ENCODE measurements at regions of chr10 and their contacts with region 1.

Region 1: GRCh38 chr10:124388823-124389612 is 29.7 kb downstream of the OAT start:
- DNase-seq: peak; percentile 94
- ATAC-seq: peak; percentile 99
- H3K4me3 ChIP-seq: peak overlapping the region in 4 of 5 experiments; percentile 38 to 75 (median 57)
- H3K4me3 Mint-ChIP-seq: peak overlapping the region; percentile 61
- H3K27ac ChIP-seq: no peak overlapping the region
- H3K27ac Mint-ChIP-seq: no peak overlapping the region
- H3K4me1 ChIP-seq: peaks cover 4 to 13% of the 10 kb centered on the region in 2 donors
- H3K4me1 Mint-ChIP-seq: peaks cover 5% of the 10 kb centered on the region
- H3K27me3 ChIP-seq: peaks cover 0 to 3% (median under 1%) of the 10 kb centered on the region in 4 experiments
- H3K27me3 Mint-ChIP-seq: peaks cover 6% of the 10 kb centered on the region
- CTCF ChIP-seq: peak; percentile 97

Region 2: DNA sequence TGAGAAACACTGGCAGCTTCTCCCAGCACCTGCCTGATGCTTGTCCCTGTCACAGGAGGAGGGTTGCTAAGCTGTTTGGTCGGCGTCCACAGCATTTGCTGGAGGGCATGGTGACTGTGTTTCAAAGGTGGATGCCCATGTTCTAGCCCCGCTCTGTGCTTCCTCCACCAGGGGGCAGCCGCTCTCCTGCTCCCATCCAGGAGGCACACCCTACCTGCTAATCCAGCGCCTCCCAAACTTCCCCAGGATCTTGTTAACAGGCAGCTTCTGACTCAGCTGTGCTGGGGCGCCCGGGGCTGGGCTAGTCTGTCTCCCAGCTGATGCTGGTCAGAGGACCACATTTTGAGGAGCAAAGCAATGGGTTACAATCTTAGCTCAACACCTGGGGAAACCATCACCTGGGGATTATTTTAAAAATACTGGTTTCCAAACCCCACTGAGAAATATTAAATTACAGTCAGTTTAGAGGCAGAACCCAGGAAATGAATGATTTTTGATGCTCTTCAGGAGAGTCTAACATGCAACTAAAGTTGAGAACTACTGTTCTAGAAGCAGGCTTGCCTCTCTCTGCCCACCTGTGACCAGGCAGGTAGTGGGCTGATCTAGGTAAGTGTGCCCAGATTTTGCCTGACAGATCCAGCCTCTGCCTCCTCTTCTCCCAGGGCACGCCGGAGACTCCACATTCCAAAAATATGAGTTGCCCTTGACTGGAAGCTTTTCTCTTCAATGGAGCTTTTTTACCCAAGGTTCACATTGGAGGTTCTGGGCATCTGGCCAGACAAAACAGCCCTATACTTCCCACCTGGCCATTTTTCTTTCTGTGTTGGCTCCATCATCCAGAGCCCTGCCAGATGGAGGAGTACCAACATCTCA is 815.5 kb before region 1 on chr10:
- CTCF ChIA-PET with region 1: no interaction called
- POLR2A ChIA-PET with region 1: no interaction called
- intact Hi-C with region 1: loop called (anchors 2 kb)
- DNase-seq: peak; percentile 37
- ATAC-seq: no peak
- H3K4me3 ChIP-seq: no peak overlapping the region
- H3K4me3 Mint-ChIP-seq: no peak overlapping the region
- H3K27ac ChIP-seq: no peak overlapping the region
- H3K27ac Mint-ChIP-seq: no peak overlapping the region
- H3K4me1 ChIP-seq: no peaks in the 10 kb centered on the region
- H3K4me1 Mint-ChIP-seq: no peaks in the 10 kb centered on the region
- H3K27me3 ChIP-seq: peaks cover 0 to 19% (median 7%) of the 10 kb centered on the region in 4 experiments
- H3K27me3 Mint-ChIP-seq: peaks cover 42% of the 10 kb centered on the region
- CTCF ChIP-seq: peak; percentile 58

Region 3: DNA sequence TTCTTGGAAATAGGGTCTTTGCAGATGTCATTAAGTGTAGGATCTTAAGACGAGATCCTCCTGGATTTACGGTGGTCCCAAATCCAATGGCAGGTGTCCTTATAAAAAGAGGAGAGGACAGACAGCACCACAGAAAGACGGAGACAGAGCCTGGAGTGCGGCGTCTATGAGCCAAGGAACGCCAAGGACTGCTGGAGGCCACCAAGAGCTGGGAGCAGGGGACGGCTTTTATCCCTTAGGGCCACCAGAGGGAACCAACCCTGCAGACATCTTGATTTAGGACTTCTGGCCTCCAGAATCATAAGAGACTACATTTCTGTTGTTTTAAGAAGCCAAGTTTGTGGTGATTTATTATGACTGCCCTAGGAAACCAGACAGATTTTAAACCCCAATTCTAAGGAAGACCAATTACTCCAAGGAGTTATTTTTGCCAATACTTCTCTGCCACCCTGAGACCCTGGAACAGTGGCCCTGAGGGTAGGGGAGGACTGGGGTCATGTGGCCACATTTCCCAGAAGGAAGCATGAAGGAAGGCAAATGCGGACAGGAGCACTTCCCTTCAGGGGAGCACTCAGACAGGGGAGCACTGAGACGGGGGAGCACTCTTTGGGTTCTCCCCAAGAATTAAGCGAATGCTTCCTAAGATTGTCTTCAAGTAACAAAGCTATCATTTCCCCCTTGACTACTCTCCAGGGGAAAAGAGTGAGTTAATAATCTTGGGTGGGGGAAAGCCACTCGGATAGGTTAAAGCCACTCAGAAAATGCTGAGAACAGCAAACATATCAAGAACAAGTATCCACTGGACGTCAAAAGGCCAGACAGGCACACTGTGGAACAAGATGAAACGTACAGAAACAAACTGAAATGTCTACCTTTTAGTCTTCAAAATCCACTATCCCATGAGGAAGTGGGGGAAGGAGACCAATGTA is 363.1 kb before region 1 on chr10:
- CTCF ChIA-PET with region 1: interaction called, 23 read pairs
- POLR2A ChIA-PET with region 1: no interaction called
- intact Hi-C with region 1: loop called (anchors 1 kb)
- DNase-seq: peak; percentile 71
- ATAC-seq: peak; percentile 74
- H3K4me3 ChIP-seq: no peak overlapping the region
- H3K4me3 Mint-ChIP-seq: no peak overlapping the region
- H3K27ac ChIP-seq: no peak overlapping the region
- H3K27ac Mint-ChIP-seq: no peak overlapping the region
- H3K4me1 ChIP-seq: peaks cover 12 to 15% of the 10 kb centered on the region in 2 donors
- H3K4me1 Mint-ChIP-seq: peaks cover 14% of the 10 kb centered on the region
- H3K27me3 ChIP-seq: no peaks in the 10 kb centered on the region
- H3K27me3 Mint-ChIP-seq: no peaks in the 10 kb centered on the region
- CTCF ChIP-seq: peak; percentile 67

Region 4: GRCh38 chr10:124035928-124036558 is 353.0 kb before region 1 on chr10:
- CTCF ChIA-PET with region 1: interaction called, 13 read pairs
- POLR2A ChIA-PET with region 1: no interaction called
- intact Hi-C with region 1: no loop called
- DNase-seq: peak; percentile 90
- ATAC-seq: peak; percentile 91
- H3K4me3 ChIP-seq: peak overlapping the region in 4 of 5 experiments; percentile 30 to 47 (median 36)
- H3K4me3 Mint-ChIP-seq: peak overlapping the region; percentile 85
- H3K27ac ChIP-seq: peak overlapping the region; percentile 79 to 85
- H3K27ac Mint-ChIP-seq: peak overlapping the region; percentile 98
- H3K4me1 ChIP-seq: peaks cover 19 to 41% of the 10 kb centered on the region in 2 donors
- H3K4me1 Mint-ChIP-seq: peaks cover 26% of the 10 kb centered on the region
- H3K27me3 ChIP-seq: no peaks in the 10 kb centered on the region
- H3K27me3 Mint-ChIP-seq: no peaks in the 10 kb centered on the region
- CTCF ChIP-seq: no peak

Region 5: DNA sequence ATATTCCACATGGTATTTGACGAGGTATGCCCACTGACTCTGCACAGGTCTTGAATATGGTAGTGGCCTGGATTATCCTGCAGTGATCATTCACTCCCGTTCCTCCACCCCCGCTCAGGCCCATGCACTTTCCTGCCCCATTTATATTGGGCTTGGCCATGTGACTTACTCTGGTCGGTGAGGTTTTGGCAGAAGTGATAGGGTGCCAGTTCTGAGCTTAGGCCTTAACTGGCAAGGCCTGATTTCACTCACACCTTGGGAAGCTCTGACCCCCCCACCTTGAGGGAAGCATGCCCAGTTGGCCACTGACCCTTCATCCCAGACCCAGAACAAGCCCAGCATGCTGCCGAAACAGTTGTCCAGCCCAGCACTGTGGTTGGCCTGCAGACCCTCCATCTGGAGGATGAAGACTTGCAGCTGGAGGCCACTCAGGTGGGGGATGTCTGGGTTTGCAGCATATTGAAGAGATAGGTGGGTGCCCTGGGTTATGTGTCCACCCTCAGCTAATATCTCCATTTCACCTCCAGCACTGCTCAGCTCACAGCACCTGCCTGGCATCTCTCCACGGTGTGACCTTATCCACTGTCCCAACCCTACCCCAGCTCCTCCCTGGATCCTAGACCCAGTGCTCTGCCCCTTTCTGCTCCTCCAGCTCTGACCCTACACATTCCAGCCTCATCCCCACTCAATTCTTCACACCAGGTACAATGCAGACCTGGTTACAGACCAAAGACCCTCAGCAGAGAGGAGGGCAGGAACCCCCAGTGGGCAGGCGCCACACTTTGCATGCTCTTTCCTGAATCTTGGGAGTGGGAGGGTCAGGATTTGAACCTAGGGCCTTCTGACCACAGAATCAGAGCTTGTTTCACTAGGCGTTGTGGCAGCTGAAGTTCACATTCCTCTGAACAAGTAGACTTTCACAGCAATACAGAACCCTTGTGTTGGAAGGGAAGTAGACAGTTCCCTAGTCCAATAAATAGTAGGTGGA is 157.6 kb before region 1 on chr10:
- CTCF ChIA-PET with region 1: interaction called, 3 read pairs
- POLR2A ChIA-PET with region 1: no interaction called
- intact Hi-C with region 1: loop called (anchors 5 kb)
- DNase-seq: peak; percentile 62
- ATAC-seq: peak; percentile 55
- H3K4me3 ChIP-seq: no peak overlapping the region
- H3K4me3 Mint-ChIP-seq: peak overlapping the region; percentile 19
- H3K27ac ChIP-seq: no peak overlapping the region
- H3K27ac Mint-ChIP-seq: peak overlapping the region; percentile 88
- H3K4me1 ChIP-seq: no peaks in the 10 kb centered on the region
- H3K4me1 Mint-ChIP-seq: peaks cover 3% of the 10 kb centered on the region
- H3K27me3 ChIP-seq: no peaks in the 10 kb centered on the region
- H3K27me3 Mint-ChIP-seq: no peaks in the 10 kb centered on the region
- CTCF ChIP-seq: no peak

Region 6: GRCh38 chr10:124403548-124403947 is 14.5 kb after region 1 on chr10:
- CTCF ChIA-PET with region 1: interaction called, 23 read pairs
- POLR2A ChIA-PET with region 1: no interaction called
- intact Hi-C with region 1: loop called (anchors 1 kb)
- DNase-seq: peak; percentile 83
- ATAC-seq: peak; percentile 99
- H3K4me3 ChIP-seq: no peak overlapping the region
- H3K4me3 Mint-ChIP-seq: no peak overlapping the region
- H3K27ac ChIP-seq: no peak overlapping the region
- H3K27ac Mint-ChIP-seq: peak overlapping the region; percentile 66
- H3K4me1 ChIP-seq: peaks cover 5 to 9% of the 10 kb centered on the region in 2 donors
- H3K4me1 Mint-ChIP-seq: peaks cover 9% of the 10 kb centered on the region
- H3K27me3 ChIP-seq: no peaks in the 10 kb centered on the region
- H3K27me3 Mint-ChIP-seq: no peaks in the 10 kb centered on the region
- CTCF ChIP-seq: peak; percentile 74

Region 7: DNA sequence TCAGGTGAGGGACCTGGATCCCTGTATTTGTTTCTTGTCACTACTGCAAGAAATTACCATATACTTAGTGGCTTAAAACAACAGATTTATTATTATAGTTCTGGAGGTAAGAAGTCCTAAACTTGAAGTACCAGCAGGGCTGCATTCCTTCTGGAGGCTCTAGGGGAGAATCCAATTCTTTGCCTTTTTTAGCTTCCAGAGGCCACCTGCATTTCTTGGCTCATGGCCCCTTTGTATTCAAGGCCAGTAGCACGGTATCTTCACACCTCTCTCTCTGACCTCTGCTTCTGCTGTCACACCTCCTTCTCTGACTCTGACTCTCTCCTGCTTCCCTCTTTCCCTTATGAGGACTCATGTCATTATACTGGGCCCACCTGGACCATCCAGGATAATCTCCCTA is 70.4 kb after region 1 on chr10:
- CTCF ChIA-PET with region 1: no interaction called
- POLR2A ChIA-PET with region 1: no interaction called
- intact Hi-C with region 1: no loop called
- DNase-seq: no peak
- ATAC-seq: no peak
- H3K4me3 ChIP-seq: no peak overlapping the region
- H3K4me3 Mint-ChIP-seq: no peak overlapping the region
- H3K27ac ChIP-seq: no peak overlapping the region
- H3K27ac Mint-ChIP-seq: no peak overlapping the region
- H3K4me1 ChIP-seq: peaks cover 4 to 16% of the 10 kb centered on the region in 2 donors
- H3K4me1 Mint-ChIP-seq: peaks cover 12% of the 10 kb centered on the region
- H3K27me3 ChIP-seq: peaks cover 0 to 24% (median 8%) of the 10 kb centered on the region in 4 experiments
- H3K27me3 Mint-ChIP-seq: peaks cover 23% of the 10 kb centered on the region
- CTCF ChIP-seq: no peak

Measured in B cell (primary cell).